Activated CD4-positive, alpha-beta T cell treated with anti-CD3 and anti-CD28 coated beads, Interleukin-2, amount 10 ng/mL, durations not matched to agents 24 days and 14 days (primary cell): ENCODE measurements at regions of chr12 and their contacts with region 1.

Region 1: DNA sequence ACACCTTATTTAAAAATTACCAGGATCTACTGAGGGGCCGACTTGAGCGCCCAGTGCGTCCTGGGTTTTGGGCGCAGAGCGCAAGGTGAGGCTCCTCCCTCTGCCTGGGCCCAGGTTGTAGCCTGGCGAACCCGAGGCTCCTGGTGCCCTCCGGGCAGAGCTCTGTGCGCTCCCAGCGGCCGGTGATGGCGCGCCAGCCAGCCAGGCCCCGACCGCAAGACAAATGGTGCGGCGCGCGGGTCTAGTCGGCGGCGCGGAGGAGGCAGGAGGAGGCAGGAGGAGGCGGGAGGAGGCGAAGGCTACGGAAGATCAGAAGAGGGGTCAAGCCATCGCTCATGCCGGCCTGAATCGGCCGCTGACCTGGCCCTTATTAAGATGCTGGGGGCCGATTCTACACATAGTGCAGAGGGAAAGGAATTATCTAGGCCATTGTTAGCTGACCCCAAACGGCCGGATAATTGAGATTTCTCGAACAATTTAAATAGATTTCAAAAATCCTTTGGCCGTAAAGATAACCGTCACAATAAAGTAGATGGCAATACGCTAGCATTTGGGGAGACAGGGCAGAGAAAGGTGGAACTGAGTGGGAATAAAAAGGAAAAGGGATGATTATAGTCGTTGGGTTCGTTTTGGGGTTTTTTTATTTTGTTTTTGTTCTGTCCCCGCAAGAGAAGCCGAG is 2.8 kb downstream of the TBX5 start:
- DNase-seq: no peak
- H3K4me3 Mint-ChIP-seq: no peak overlapping the region
- H3K27ac Mint-ChIP-seq: no peak overlapping the region
- H3K4me1 Mint-ChIP-seq: no peaks in the 10 kb centered on the region
- H3K27me3 Mint-ChIP-seq: peaks cover 93% of the 10 kb centered on the region

Region 2: DNA sequence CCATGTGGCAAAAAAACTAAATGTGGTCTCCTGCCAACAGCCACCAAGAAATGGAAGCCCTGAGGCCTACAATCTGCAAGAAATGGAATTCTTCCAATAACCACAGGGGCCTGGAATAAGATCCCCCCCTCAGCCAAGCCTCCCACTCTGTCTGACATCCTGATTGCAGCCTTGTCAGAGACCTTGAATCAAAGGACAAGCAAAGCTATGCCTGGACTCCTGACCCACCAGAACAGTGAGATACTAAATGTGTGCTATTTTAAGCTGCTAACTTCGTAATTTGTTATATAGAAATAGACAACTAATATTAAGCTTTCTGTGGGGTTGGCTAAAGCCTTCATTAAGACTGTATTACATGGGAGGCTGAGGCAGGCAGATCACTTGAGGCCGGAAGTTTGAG is 74.9 kb before region 1 on chr12:
- intact Hi-C with region 1: no loop called
- DNase-seq: no peak
- H3K4me3 Mint-ChIP-seq: no peak overlapping the region
- H3K27ac Mint-ChIP-seq: no peak overlapping the region
- H3K4me1 Mint-ChIP-seq: no peaks in the 10 kb centered on the region
- H3K27me3 Mint-ChIP-seq: no peaks in the 10 kb centered on the region

Region 3: DNA sequence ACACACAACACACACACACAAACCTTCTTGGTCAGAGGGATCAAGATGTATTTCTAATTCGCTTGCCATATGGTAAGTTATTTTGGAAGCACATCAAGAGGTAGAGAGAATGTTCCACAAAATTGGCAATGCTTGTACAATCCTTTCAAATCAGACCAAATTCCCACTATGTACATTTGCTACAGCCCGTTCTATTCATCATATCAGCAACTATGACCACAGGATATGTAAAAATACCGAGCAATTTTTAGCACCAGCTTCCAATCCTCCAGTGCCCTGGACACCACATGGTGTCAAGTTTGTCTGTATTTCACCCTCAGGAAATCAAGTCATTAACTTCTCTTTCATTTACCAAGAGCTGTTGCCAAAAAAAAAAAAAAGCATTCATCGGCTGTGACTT is 18.4 kb before region 1 on chr12:
- intact Hi-C with region 1: no loop called
- DNase-seq: no peak
- H3K4me3 Mint-ChIP-seq: no peak overlapping the region
- H3K27ac Mint-ChIP-seq: no peak overlapping the region
- H3K4me1 Mint-ChIP-seq: no peaks in the 10 kb centered on the region
- H3K27me3 Mint-ChIP-seq: no peaks in the 10 kb centered on the region

Region 4: GRCh38 chr12:114440270-114441038 is 37.3 kb after region 1 on chr12:
- intact Hi-C with region 1: loop called (anchors 2 kb)
- DNase-seq: no peak
- H3K4me3 Mint-ChIP-seq: no peak overlapping the region
- H3K27ac Mint-ChIP-seq: peak overlapping the region; percentile 25
- H3K4me1 Mint-ChIP-seq: peaks cover 1% of the 10 kb centered on the region
- H3K27me3 Mint-ChIP-seq: peaks cover 72% of the 10 kb centered on the region

Region 5: DNA sequence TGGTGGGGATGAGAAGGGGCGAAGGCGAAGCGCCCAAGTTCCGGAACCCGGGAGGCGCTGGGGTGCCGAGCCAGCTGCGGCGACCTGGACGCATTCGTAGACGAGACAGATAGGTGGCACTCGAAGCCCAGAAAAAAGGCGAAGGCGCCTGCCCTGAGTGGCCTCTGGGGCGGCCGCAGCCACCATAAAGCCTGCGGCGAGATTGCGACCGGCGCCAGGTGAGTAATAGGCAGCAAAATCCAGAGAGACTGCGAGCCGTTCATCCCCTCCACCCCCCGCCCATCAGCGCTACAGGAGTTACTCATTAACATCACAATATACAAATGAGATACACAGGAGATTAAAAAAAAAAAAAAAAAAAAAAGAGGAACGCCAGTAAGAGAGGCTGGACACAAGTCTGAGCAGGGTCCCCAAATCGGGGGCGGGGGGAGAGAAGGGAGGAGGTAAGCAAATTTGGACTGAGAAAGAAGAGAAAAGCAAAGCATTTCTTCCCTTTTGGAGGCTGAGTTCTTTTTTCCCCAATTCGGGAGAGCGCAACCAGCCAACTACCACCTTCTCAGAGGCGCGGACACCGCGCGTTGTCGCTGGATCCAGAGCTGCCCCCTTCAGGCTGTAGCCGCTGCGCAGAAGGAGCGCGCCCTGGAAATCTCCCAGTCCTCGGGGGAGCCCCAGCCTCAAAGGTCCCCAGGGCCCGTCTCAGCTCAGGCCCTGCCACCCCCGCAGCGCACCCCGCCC is 265.2 kb after region 1 on chr12:
- intact Hi-C with region 1: loop called (anchors 2 kb)
- DNase-seq: peak; percentile 58
- H3K4me3 Mint-ChIP-seq: no peak overlapping the region
- H3K27ac Mint-ChIP-seq: peak overlapping the region; percentile 63
- H3K4me1 Mint-ChIP-seq: no peaks in the 10 kb centered on the region
- H3K27me3 Mint-ChIP-seq: peaks cover 71% of the 10 kb centered on the region

Region 6: DNA sequence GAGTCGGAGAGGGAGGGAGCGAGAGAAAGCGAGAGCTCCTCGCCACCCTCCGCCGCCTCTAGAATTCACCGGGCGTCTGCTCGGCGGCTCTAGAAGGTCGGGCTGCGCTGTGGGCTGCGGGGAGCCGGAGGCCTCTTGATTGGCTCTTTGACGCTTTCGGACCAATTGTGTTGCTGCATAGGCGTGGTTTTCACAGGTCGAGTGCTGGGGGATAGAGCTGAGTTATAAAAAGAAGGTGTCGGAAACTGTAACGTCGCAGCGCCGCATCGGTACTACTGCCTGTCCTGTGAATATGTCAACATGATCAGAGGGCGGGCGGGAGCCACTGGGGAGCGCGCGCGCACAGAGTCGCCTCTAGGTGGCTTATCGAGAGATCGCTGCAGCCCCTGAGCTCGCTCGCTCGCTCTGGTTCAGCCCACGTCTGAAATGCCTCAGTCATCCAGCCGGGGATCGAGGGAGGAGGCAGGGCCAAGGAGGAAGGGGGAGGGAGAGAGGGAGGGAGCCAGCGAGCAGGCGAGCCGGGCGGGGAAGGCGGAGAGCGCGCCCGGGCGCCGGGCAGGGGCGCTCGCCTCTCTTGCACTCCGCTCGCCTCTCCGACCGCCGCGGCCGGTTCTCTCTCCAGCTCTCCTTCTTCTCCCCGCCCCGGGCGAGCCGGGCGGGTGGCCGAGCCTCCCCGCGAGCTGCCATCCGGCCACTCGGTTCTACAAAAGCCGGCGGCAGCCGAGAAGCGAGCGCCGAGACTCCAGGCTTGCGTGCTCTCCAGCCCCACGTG is 281.1 kb after region 1 on chr12 and contains the start of gene TBX3:
- intact Hi-C with region 1: loop called (anchors 5 kb)
- DNase-seq: peak; percentile 73
- H3K4me3 Mint-ChIP-seq: peak within 1 kb of the TSS; percentile 57
- H3K27ac Mint-ChIP-seq: peak within 1 kb of the TSS; percentile 81
- H3K4me1 Mint-ChIP-seq: peaks cover 10% of the 10 kb centered on the region
- H3K27me3 Mint-ChIP-seq: peaks cover 91% of the 10 kb centered on the region
- total RNA-seq, gene TBX3: not detected in 2 replicates

Region 7: DNA sequence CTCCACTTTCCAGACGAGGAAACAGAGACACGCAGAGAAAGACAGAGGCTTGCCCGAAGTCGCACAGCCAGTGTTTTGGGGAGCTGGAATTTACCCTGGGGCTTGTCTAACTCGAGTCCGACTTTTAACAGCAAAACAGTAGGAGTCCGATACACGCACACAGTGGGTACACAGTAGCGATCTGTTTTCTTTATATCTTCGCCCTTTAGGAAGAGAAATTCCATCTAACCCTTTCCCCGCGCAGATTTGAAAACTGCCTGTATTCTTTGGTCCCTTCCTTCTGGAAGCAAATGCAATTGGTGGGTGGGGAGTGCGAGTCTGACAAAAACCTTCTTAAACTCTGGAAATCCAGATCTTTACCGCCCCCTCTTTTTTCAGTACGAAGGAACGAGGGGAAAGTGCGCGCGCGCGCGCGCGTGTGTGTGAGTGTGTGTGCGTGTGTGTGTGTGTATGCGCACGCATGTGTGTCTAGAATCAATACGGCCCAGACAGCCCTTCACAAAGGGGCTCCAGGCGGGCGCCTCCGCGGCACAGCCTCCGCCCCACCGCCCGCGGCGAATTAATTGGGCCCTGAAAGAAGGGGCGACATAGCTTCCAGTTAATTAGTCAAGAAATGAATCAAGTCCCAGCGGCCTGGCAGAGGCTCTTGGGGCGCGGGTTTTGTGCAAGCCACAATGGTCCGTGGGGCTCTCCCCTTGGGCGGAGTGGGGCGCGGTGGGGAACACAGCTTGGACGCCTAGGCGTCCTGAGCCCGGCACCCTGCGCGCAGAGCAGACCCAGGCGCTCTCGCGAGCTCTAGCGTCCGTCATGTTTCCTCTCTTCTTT is 294.8 kb after region 1 on chr12:
- intact Hi-C with region 1: loop called (anchors 5 kb)
- DNase-seq: no peak
- H3K4me3 Mint-ChIP-seq: no peak overlapping the region
- H3K27ac Mint-ChIP-seq: no peak overlapping the region
- H3K4me1 Mint-ChIP-seq: no peaks in the 10 kb centered on the region
- H3K27me3 Mint-ChIP-seq: peaks cover 90% of the 10 kb centered on the region